Activated naive CD4-positive, alpha-beta T cell treated with anti-CD3 and anti-CD28 coated beads for 36 hours (primary cell): ENCODE measurements at regions of chr16 and their contacts with region 1.

Region 1: DNA sequence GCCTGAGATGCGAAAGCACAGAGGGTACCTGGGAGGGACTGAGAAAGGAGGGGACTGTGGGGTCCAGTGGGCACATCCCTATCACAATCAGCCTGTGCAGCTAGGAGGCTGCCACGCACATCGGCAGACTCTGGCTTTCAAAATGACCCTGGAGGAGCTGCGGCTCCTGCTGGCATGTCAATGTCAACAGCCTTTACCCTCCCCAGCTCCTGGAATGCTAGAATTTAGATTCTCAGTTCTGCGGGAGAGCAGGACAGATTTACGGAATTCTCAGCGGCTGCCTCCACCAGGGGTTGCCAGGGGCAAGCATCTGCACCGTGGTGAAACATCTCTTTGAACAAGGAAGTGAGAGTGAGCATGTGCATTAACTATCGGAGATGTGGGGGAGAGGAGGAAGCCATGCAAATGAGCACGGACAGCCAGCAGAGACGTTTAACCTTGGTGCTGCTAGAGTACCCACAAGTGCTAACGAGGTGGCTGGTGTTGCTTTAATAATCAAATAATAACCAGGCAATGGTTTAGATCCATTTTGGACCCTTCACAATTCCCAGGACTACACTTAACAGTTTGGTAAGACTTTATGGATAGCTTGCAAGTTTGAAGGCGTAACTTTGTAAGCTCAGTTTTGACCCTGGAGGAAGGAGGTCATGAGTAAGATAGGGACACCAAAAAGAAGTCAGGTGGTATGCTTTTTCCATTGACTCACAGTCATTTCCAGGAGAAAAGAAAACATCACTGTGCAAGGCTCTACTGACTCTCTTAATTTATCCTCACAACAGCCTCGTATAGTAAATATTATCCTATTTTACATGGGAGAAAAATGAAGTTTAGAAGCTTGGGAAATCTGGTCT is 54.1 kb downstream of the XYLT1 start:
- DNase-seq: peak; percentile 72
- H3K4me3 Mint-ChIP-seq: peak overlapping the region; percentile 76
- H3K27ac Mint-ChIP-seq: peak overlapping the region; percentile 86
- H3K4me1 Mint-ChIP-seq: peaks cover 39% of the 10 kb centered on the region
- H3K27me3 Mint-ChIP-seq: no peaks in the 10 kb centered on the region

Region 2: GRCh38 chr16:17050468-17050867 is 366.2 kb before region 1 on chr16:
- CTCF ChIA-PET with region 1: no interaction called
- intact Hi-C with region 1: no loop called
- DNase-seq: no peak
- H3K4me3 Mint-ChIP-seq: no peak overlapping the region
- H3K27ac Mint-ChIP-seq: no peak overlapping the region
- H3K4me1 Mint-ChIP-seq: peaks cover 3% of the 10 kb centered on the region
- H3K27me3 Mint-ChIP-seq: no peaks in the 10 kb centered on the region

Region 3: DNA sequence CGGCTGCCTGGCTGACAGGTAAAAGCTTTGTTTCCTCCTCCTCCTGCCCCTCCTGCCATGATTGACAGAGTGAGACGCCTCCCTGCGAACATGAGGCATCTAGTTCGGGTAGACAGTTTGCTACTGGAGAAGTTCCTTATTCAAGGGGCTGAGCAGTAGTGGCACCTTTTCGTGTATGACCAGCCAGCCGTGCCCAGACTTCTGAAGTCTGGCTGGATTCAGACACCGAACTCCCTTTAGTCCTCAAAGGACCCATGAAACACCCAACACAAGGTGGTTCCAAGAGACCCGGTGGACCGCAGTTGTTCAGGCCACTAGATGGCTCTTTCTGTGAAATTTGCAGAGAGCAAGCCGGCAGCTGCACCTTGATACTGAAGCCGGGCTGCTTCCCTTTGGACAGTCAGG is 138.7 kb before region 1 on chr16:
- CTCF ChIA-PET with region 1: interaction called, 3 read pairs
- intact Hi-C with region 1: loop called (anchors 2 kb)
- DNase-seq: peak; percentile 25
- H3K4me3 Mint-ChIP-seq: no peak overlapping the region
- H3K27ac Mint-ChIP-seq: no peak overlapping the region
- H3K4me1 Mint-ChIP-seq: peaks cover 32% of the 10 kb centered on the region
- H3K27me3 Mint-ChIP-seq: no peaks in the 10 kb centered on the region

Region 4: DNA sequence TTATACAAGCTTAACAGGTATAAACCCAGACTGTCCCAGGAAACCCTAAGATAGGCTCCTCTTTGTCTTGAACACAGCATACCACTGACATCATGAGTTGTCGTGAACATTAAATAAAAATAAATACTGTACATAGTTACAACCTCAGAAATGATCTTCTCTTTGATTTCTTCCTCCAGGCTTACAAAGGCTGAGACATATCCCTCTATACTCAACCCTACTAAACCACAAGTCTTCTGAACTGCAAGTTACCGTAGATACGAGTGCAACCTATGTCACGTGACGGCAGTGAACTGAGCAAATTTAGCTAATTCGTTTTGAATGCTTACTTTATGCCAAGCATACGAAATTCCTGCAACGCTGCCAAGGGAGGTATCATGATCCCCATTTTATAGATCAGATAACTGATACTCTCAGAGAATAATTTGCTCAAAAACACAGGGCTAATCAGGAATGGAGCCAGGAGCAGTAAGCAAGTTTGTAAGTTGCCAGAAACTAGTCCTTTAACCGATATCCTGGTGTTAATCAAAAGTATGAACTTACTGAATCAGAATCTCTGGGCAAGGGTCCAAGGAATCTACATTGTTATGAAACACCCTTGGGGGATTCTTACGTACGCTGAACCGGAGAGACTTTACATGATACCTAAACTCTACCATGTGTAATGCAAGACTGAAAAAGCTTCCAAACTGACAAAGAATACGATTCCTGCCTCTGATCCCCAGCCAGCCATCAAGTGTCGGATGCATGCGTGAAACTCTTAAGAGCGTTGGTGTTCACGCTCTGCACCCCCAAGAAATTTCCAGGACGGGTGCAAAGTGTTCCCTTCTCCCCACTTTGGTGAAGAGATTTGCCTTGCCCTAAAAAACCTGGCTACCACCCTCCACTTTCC is 52.1 kb before region 1 on chr16:
- CTCF ChIA-PET with region 1: interaction called, 7 read pairs
- intact Hi-C with region 1: loop called (anchors 1 kb)
- DNase-seq: peak; percentile 78
- H3K4me3 Mint-ChIP-seq: peak overlapping the region; percentile 55
- H3K27ac Mint-ChIP-seq: peak overlapping the region; percentile 78
- H3K4me1 Mint-ChIP-seq: peaks cover 92% of the 10 kb centered on the region
- H3K27me3 Mint-ChIP-seq: no peaks in the 10 kb centered on the region

Region 5: GRCh38 chr16:17369421-17370222 is 47.1 kb before region 1 on chr16:
- CTCF ChIA-PET with region 1: interaction called, 7 read pairs
- intact Hi-C with region 1: loop called (anchors 1 kb)
- DNase-seq: peak; percentile 78
- H3K4me3 Mint-ChIP-seq: peak overlapping the region; percentile 89
- H3K27ac Mint-ChIP-seq: peak overlapping the region; percentile 96
- H3K4me1 Mint-ChIP-seq: peaks cover 80% of the 10 kb centered on the region
- H3K27me3 Mint-ChIP-seq: no peaks in the 10 kb centered on the region

Region 6: GRCh38 chr16:17439580-17439979 is 22.9 kb after region 1 on chr16:
- CTCF ChIA-PET with region 1: interaction called, 15 read pairs
- intact Hi-C with region 1: loop called (anchors 1 kb)
- DNase-seq: no peak
- H3K4me3 Mint-ChIP-seq: no peak overlapping the region
- H3K27ac Mint-ChIP-seq: no peak overlapping the region
- H3K4me1 Mint-ChIP-seq: peaks cover 29% of the 10 kb centered on the region
- H3K27me3 Mint-ChIP-seq: no peaks in the 10 kb centered on the region

Region 7: DNA sequence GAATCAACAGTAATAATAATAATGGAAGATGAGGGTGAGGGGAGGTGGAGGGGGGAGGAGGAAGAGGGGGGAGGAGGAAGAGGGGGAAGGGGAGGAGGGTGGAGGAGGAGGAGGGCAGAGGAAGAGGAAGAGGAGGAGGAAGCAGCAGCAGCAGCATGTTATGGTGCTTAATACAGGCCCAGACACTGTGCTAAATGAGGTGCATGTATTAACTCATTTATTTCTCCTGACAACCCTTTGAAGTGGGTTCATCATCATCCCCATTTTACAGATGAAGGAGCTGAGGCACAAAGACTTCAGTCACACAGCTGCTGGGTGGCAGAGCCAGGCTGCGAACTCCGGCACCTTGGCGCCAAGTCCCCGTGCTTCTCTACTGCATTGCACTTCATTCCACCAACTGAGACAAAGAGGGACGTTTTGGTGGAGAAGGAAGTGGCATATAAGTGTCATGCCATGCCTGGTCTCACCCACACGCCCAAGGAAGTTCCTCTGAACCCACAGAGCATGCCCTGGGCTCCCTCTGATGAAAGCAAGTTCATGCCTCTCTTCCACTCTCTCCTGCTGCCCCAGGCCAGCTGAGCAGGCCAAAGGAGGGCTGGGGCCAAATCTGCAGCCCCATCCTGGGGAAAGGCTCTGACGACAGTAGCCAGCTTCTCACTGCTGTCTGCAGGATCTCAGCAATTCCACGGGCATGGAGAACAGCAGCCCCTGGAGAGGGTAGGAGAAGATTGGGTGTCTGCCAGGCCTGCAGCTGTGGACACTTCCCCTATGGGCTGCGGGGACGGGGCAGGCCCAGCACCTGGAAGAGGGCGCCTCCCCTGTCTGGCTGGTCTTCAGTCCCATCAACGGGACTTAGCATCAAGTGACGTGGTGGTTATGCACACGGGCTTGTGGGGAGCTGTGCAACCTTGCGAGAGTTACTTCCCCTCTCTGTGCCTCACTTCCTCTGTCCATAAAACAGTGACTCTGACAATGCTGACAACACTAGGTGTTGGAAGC is 32.3 kb after region 1 on chr16:
- CTCF ChIA-PET with region 1: interaction called, 3 read pairs
- intact Hi-C with region 1: loop called (anchors 2 kb)
- DNase-seq: peak; percentile 71
- H3K4me3 Mint-ChIP-seq: peak overlapping the region; percentile 43
- H3K27ac Mint-ChIP-seq: peak overlapping the region; percentile 62
- H3K4me1 Mint-ChIP-seq: peaks cover 37% of the 10 kb centered on the region
- H3K27me3 Mint-ChIP-seq: no peaks in the 10 kb centered on the region